ENCODE measurements at regions of chr7 and their contacts with region 1.

Region 1: DNA sequence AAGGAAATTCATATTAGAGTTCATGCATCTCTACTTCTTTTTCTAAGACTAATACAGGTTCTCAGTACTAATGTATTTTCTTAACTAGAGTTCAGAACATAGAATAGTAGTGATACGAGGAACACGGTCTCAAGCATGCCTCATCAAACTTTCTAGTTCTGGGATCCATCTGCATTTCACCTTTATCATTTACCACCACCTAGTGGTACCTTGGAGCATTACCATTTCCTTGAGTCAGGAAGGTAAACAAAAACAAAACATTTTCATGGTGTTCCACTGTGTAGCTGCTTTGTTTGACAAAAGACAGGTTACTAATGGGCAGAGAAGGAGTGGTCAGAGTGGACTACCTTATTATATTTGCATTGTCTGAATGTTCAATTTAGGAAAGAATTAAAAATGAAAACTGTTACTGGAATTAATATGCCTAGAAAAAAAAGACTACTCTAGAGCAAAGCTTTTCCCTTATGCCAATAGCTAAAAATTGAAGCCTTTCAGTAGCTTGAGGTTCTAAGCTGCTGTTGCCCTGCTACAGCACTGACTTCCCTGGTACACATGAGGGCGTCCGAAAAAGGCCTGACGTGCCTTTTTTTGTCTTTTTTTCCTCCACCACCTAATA is 44.5 kb downstream of the STARD3NL start:
- DNase-seq: peak; percentile 79
- ATAC-seq: peak; percentile 79
- H3K4me3 ChIP-seq: no peak overlapping the region
- H3K27ac ChIP-seq: no peak overlapping the region
- H3K4me1 ChIP-seq: no peaks in the 10 kb centered on the region
- H3K27me3 ChIP-seq: no peaks in the 10 kb centered on the region
- CTCF ChIP-seq: peak; percentile 89

Region 2: DNA sequence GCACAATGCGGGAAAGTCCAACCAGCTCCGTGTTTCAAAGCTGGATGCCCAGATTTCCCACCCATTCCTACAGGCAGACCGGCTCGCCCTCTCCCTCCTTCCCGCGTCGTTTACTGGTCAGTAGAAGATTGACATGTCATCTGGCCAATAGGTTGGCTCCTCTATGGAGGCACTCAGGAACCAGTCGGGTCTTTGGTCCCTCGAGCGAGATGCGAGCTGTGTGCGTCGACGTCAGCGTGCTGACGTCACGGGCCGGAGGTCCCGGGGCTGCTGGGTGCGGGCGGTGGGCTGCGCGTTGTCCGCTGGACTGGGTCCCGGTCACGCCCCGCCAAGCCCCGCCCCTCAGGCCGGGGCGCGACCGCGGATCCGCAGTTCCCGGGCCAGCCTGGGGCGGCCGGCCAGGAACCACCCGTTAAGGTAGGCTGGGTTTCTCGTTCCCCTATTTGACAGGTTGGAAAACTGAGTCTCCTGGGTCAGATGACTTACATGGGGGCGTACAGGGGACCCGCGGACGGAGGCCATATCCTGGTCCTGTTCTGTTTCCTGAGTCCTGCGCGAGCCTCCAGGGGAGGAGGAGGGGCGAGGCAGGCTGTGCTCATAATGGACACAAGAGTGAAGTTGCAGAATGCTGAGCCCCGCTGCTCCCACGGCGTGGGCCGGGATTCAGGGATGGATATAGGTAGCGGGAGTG is 44.4 kb before region 1 on chr7 and contains the start of gene STARD3NL:
- CTCF ChIA-PET with region 1: no interaction called
- POLR2A ChIA-PET with region 1: no interaction called
- intact Hi-C with region 1: loop called (anchors 5 kb)
- DNase-seq: peak; percentile 99
- ATAC-seq: peak; percentile 99
- H3K4me3 ChIP-seq: peak within 1 kb of the TSS; percentile 87
- H3K27ac ChIP-seq: peak within 1 kb of the TSS; percentile 72
- H3K4me1 ChIP-seq: peaks cover 16% of the 10 kb centered on the region
- H3K27me3 ChIP-seq: no peaks in the 10 kb centered on the region
- CTCF ChIP-seq: no peak
- total RNA-seq, gene STARD3NL: 32.7 and 37.4 TPM in 2 replicates

Region 3: GRCh38 chr7:38276096-38276877 is 53.7 kb after region 1 on chr7:
- CTCF ChIA-PET with region 1: no interaction called
- POLR2A ChIA-PET with region 1: no interaction called
- intact Hi-C with region 1: no loop called
- DNase-seq: no peak
- ATAC-seq: no peak
- H3K4me3 ChIP-seq: no peak overlapping the region
- H3K27ac ChIP-seq: no peak overlapping the region
- H3K4me1 ChIP-seq: no peaks in the 10 kb centered on the region
- H3K27me3 ChIP-seq: peaks cover 86% of the 10 kb centered on the region
- CTCF ChIP-seq: no peak